ENCODE measurements at regions of chr7 and their contacts with region 1.

Region 1: GRCh38 chr7:74306730-74307469 is 17.7 kb downstream of the CLIP2 start:
- DNase-seq: peak; percentile 73
- ATAC-seq: peak; percentile 90

Region 2: DNA sequence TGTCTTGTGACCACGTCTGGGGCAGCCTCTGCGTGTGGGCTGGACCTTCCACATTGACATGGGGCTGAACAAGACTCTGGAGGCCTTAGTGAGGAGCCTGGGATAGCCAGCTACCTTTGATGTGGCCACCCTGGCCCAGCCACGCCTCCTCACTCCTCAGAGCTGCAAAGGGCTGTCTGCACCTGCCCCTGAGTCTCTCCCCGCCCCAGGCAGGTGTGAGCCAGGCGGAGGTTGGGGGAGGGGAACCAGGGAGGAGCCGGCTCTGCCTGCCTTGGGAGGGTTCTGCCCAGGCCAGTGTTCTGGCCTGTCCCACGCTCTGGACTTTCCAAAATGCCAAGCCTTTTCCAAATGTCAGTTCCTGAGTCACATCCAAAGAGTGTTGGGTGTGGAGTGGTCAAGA is 219.0 kb after region 1 on chr7:
- intact Hi-C with region 1: loop called (anchors 5 kb)
- DNase-seq: no peak
- ATAC-seq: peak; percentile 14